Adrenal gland (tissue), 19 donors: ENCODE measurements at regions of chr3 and their contacts with region 1.

Region 1: GRCh38 chr3:171959532-171960089 is 79.8 kb upstream of the FNDC3B start:
- DNase-seq: no peak
- H3K4me3 ChIP-seq: no peak overlapping the region
- H3K27ac ChIP-seq: no peak overlapping the region
- H3K4me1 ChIP-seq: no peaks in the 10 kb centered on the region
- H3K27me3 ChIP-seq: no peaks in the 10 kb centered on the region
- CTCF ChIP-seq: no peak
- POLR2A ChIP-seq: no peak

Region 2: DNA sequence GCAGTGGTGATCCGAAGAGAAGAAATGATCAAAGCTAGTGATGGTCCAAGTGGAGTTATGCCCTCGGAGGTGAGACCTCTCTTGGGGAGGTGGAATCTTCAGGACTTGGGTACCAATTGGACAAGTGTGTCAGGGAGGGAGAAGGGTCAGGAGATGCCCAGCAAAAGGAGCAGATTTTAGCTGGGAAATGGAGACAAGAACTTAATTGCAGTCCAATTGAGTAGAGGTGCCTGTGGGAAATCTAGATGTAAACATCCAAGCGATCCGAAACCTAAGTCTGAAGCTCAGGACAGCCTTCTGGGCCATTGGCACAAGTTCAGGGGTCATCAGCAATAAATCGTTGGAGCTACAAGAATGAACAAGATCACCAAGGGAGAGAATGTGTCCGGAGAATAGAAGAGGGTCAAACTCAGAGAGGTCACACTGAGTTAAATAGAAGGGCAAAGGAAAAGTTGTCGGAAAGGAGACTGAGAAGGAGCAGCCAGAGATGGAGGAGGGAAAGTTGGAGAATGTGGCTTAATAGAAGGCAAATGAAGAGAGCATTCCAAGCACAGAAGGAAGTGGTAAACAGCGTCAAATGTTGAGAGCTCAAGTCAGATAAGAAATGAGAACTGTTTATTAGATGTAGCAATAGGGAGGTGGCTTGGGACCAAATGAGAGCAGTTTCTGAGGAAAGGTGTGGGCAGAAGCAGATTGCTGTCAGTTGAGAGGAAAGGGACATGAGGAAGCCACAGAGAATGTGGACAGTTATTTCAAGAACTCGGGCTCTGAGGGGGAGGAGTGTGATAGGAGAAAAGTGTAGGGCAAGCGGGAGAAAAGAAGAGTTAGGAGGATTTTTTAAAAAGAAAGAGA is 15.6 kb after region 1 on chr3:
- intact Hi-C with region 1: loop called in 1 of 2 experiments (anchors 2 kb)
- DNase-seq: no peak
- H3K4me3 ChIP-seq: no peak overlapping the region
- H3K27ac ChIP-seq: peak overlapping the region in 1 of 5 donors; percentile 18
- H3K4me1 ChIP-seq: no peaks in the 10 kb centered on the region
- H3K27me3 ChIP-seq: no peaks in the 10 kb centered on the region
- CTCF ChIP-seq: no peak
- POLR2A ChIP-seq: no peak